ENCODE measurements at regions of chr1 and their contacts with region 1.

Region 1: DNA sequence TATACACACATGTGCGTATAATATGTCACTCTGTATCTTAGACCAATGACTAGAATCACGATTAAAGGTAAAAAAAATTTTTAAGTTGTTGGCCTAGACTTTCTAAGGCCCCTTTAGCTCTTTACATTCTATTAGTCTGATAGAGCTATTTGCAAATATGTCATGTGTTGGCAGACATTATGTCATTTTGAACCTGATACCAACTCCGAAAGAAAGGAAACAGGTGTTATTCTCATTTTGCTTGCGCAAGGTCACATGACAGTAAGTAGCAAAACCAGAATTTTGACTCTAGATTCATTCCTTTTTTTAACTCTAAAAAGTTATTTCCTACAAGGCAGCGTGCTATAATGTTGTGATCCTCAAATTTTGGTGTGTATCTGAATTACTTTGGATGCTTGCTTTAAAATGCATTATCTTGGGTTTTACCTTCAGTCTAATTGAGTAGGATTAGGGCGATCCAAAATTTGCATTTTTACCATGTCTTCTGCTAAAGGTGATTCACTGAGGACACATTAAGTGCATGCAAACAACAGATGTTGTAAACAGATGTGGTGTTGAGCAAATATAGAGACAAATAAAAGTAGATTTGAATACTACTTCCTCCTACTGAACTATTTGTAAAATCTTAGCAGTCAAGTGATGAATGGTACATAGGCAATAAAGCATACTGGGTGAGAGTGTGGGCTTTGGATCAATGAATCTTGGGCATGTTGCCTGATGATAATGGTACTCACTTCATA is 63.5 kb upstream of the KIAA1614 start:
- DNase-seq: no peak
- ATAC-seq: no peak

Region 2: GRCh38 chr1:180662709-180663108 is 186.5 kb before region 1 on chr1:
- intact Hi-C with region 1: no loop called
- DNase-seq: no peak
- ATAC-seq: no peak

Region 3: DNA sequence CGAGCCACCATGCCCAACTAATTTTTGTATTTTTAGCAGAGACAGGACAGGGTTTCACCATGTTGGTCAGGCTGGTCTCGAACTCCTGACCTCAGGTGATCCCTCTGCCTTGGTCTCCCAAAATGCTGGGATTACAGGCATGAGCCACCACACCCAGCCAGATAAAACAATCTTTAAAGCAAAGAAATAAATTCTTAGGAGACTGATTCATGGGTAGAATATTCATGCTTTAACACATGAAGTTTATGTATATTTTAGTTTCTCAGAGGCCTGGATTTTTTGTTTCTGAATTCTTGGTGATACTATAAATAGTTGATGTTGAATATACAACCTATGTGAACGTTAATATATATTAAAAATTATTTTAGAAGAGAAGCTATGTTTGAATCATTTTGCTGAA is 63.9 kb before region 1 on chr1:
- intact Hi-C with region 1: loop called (anchors 10 kb)
- DNase-seq: no peak
- ATAC-seq: no peak

Measured in Right ventricle myocardium superior (tissue), 1 donor.